Activated CD4-positive, alpha-beta T cell treated with anti-CD3 and anti-CD28 coated beads for 36 hours (primary cell): ENCODE measurements at regions of chr17 and their contacts with region 1.

Region 1: DNA sequence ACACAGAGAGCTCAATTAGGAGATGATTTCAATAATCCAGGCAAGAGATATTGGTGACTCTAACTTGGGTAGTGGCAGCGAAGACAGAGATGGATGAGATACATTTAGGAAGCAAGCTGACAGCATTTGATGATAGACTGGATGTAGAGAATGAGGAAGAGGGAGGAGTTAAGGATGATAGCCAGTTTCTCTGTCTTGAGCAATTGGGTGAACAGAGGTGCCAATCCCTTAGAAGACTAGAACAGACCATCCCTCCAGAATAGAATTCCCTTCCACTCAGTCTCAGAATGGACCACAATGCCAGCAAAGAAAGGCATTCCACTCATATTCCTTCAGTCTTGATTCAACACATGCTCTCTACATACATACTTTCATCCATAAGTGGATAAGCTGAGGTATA is 17.2 kb downstream of the POLG2 start:
- DNase-seq: no peak
- ATAC-seq: no peak
- H3K4me3 Mint-ChIP-seq: no peak overlapping the region
- H3K27ac Mint-ChIP-seq: no peak overlapping the region
- H3K4me1 Mint-ChIP-seq: peaks cover 4% of the 10 kb centered on the region
- H3K27me3 Mint-ChIP-seq: no peaks in the 10 kb centered on the region

Region 2: DNA sequence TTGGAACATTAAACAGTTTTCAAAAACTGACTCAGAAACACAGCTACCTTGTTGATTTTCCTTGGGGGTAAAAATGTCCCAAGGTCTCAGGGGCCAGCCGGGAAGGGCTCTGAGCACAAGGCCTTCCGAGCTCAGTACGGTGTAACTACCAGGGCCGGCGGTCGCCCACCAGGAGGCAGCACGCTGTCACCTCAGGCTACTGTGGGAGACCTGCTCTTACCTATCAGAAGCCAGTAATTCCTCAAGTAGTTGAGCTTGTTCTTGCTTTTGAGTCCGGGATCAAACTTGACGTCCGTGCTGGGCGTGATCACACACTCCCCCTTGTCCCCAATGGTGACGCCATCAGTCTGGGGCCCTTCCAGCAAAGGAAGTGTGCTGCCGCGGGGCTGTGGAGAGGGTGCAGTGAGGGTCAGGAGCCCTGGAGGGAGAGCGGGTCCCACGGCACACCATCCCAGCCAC is 415.9 kb before region 1 on chr17:
- CTCF ChIA-PET with region 1: no interaction called
- POLR2A ChIA-PET with region 1: no interaction called
- intact Hi-C with region 1: no loop called
- DNase-seq: peak; percentile 84
- ATAC-seq: peak; percentile 45
- H3K4me3 Mint-ChIP-seq: peak overlapping the region; percentile 56
- H3K27ac Mint-ChIP-seq: peak overlapping the region; percentile 85
- H3K4me1 Mint-ChIP-seq: peaks cover 84% of the 10 kb centered on the region
- H3K27me3 Mint-ChIP-seq: no peaks in the 10 kb centered on the region

Region 3: DNA sequence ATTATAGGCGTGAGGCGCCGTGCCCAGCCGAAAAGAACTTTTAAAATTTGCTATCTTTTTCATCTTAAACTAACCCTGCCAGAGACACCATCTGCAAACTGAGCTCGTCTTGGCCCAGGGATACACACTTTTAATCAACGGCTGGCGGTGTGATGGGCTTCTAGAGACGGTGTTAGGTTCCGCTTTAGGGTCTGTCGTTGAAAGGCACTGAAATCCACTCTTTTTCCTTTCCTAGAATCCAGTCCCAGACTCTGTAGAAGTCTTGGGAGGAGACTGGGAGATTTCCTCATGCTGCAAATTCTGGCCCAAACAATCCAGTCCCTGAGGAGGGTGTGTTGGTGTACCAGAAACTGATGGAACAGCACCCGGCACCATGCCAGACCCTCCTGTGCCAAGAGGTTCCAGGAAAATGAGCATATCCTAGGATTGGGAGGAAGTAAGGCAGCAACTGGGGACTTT is 164.6 kb before region 1 on chr17:
- CTCF ChIA-PET with region 1: no interaction called
- POLR2A ChIA-PET with region 1: no interaction called
- intact Hi-C with region 1: loop called in 1 of 2 experiments (anchors 5 kb)
- DNase-seq: no peak
- ATAC-seq: no peak
- H3K4me3 Mint-ChIP-seq: no peak overlapping the region
- H3K27ac Mint-ChIP-seq: no peak overlapping the region
- H3K4me1 Mint-ChIP-seq: no peaks in the 10 kb centered on the region
- H3K27me3 Mint-ChIP-seq: no peaks in the 10 kb centered on the region

Region 4: GRCh38 chr17:64718059-64718458 is 238.4 kb after region 1 on chr17:
- CTCF ChIA-PET with region 1: no interaction called
- POLR2A ChIA-PET with region 1: no interaction called
- intact Hi-C with region 1: no loop called
- DNase-seq: no peak
- ATAC-seq: peak; percentile 71
- H3K4me3 Mint-ChIP-seq: no peak overlapping the region
- H3K27ac Mint-ChIP-seq: no peak overlapping the region
- H3K4me1 Mint-ChIP-seq: peaks cover 14% of the 10 kb centered on the region
- H3K27me3 Mint-ChIP-seq: no peaks in the 10 kb centered on the region